ENCODE measurements at regions of chr14 and their contacts with region 1.

Region 1: DNA sequence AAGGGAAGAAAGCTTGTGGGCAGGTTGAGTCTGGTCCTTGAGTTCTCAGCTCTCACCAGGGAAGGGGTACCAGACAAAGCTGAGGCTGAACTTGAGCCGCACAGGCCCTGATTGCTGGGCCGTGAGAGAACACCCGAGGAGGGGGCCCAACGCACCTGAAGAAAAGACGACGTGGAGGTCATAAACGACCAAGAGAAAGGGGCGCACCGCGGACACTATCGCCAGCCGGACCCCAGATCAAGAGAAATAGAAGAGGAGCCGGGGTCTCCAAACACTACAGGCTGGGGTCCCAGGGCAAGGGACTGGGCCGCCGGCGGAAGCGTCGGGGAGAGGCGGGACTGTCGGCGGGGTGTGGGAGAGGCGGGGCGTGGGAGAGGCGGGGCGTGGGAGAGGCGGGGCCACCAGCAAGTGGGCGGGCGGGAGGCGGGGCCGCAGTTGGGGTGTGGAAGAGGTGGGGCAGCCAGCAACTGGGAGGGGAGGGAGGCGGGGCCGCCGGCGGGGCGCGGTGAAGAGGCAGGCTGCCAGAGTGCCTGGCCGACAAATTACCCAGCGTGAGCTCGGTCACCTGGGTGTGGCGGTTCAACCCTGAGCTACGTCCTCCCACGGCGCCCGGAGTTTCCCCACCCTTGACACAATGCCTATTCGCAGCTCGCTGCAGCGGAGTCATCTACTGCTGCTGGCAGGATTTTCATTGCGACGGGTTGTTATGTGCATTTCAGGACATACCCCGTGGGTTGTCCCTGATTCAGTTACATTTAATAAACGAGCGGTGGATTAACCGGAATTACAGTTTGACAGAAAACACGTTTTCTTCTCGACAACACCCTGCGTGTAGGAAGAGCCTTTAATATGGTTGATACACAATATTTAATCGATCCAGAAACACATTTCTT is 15.5 kb upstream of the NEMF start:
- ATAC-seq: peak; percentile 94 to 98 (median 96)
- H3K4me3 ChIP-seq: peak overlapping the region; percentile 35 to 51 (median 47)
- H3K27ac ChIP-seq: peak overlapping the region; percentile 74 to 78
- H3K4me1 ChIP-seq: peaks cover 3 to 12% of the 10 kb centered on the region in 2 donors

Region 2: DNA sequence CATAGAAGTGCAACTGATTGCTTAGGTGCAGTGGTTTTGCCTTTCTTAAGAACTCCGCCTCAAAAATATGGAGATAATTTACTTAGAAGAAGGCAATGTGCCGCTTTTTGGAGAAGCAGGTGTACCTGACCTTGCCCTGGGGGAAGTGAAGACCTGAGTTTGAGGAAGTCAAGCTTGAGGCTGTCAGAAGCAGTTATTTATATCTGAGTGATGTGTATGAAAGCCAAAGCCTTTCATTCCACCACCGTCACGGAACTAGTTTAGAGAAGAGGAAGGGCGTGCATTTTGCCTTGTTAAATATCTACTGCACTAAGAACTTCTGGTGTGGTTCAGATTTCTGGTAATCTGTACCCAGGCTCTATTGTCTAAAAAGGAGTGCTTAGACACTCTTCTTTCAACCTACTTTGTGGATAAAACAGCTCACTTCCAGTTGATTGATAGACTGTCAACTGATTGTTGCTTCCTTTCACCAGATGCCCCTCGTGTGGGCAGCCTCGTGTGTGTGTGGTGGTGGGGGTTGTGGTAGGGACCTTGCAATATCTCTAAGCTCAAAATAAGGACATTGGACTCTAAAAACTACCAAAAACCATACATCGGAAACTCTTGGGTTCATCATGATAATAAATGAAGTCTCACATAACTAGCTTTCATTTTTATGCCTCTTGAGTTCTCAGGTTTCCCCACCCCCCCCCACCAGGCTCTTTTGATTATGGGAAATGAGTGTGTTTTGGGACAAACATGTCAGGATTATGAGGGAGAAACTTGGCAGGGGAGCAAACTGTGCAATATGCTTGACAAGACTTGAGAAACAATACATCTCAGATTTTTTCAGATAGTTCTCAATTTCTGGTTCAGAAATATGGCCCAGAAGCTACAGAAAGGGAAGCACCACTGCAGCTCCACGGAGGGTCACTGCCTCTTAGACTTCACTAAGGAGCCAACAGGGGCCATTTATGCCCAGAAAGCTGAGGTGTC is 103.4 kb after region 1 on chr14:
- in situ Hi-C with region 1: no loop called
- ATAC-seq: peak in 1 of 8 experiments; percentile 5
- H3K4me3 ChIP-seq: no peak overlapping the region
- H3K27ac ChIP-seq: no peak overlapping the region
- H3K4me1 ChIP-seq: peaks cover 5 to 22% of the 10 kb centered on the region in 2 donors

Region 3: DNA sequence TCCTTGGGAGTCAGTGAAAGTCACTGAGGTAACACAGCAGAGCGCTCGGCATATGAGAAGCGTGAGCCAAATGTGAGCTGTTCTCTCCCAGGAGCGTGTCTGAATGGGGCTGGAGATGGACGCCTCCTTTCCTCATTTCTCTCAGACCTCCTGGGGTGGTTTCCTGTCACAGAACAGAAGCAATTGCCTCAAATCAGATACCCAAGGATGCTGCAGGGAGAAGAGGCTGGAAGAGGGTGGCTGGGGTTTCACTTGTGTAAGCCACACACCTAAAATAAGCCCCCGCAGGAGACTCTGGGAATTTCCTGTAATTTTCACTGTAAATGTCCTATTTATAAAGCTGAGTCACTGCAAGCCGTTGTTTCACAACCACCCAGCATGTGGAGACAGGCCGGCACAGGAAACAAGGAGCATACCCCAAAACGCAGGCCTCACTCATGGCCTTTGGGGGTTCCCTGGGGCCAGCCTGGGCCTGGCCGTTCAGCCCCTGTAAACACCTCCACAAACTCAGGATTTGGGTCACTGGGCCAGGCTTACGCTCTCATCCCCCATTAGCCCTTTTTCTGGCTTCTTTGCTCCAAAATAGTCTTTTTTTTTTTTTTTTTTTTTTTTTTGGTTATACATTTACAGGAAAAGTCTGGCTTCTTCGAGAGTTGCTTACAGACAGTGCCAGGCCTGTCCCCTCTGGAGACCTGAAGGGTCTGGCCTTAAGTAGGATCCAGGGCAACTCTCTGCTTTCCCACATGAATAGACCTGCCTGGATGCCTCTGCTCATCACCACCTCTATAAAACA is 193.0 kb after region 1 on chr14:
- in situ Hi-C with region 1: no loop called
- ATAC-seq: peak; percentile 46 to 87 (median 60)
- H3K4me3 ChIP-seq: no peak overlapping the region
- H3K27ac ChIP-seq: no peak overlapping the region
- H3K4me1 ChIP-seq: peaks cover 11 to 18% of the 10 kb centered on the region in 2 donors

Region 4: GRCh38 chr14:50109342-50109741 is 241.3 kb after region 1 on chr14:
- in situ Hi-C with region 1: loop called in 8 of 9 experiments (anchors 10 to 25 kb)
- ATAC-seq: peak in 1 of 8 experiments; percentile 35
- H3K4me3 ChIP-seq: no peak overlapping the region
- H3K27ac ChIP-seq: no peak overlapping the region
- H3K4me1 ChIP-seq: no peaks in the 10 kb centered on the region